ENCODE measurements at regions of chr9 and their contacts with region 1.

Region 1: DNA sequence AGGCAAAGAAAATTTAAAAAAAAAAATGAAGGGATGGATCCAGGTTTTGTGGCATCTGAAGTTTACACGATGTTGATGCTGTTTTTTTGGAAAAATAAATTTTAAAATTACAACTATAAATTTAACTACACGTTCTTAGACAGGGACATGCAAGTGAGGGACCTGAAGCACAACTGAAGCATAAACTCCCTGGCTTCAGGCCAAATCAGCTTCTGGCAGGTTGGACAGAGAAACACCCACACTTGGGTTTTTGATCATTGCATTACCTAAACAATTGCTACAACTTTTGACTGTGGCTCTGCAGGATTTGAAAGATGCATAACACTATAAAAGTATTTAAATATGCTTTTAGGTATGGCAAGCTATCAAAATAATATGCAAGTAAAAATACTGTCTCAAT is 1318.3 kb upstream of the DMAC1 start:
- DNase-seq: no peak
- H3K4me3 ChIP-seq: no peak overlapping the region
- H3K27ac ChIP-seq: no peak overlapping the region
- H3K4me1 ChIP-seq: no peaks in the 10 kb centered on the region
- H3K27me3 ChIP-seq: no peaks in the 10 kb centered on the region
- CTCF ChIP-seq: no peak
- POLR2A ChIP-seq: no peak

Region 2: GRCh38 chr9:9079473-9079872 is 38.4 kb before region 1 on chr9:
- CTCF ChIA-PET with region 1: no interaction called
- POLR2A ChIA-PET with region 1: no interaction called
- dilution Hi-C with region 1: no loop called
- intact Hi-C with region 1: loop called (anchors 1 kb)
- DNase-seq: no peak
- H3K4me3 ChIP-seq: no peak overlapping the region
- H3K27ac ChIP-seq: no peak overlapping the region
- H3K4me1 ChIP-seq: no peaks in the 10 kb centered on the region
- H3K27me3 ChIP-seq: no peaks in the 10 kb centered on the region
- CTCF ChIP-seq: no peak
- POLR2A ChIP-seq: no peak